Posterior vena cava (tissue), 2 donors: ENCODE measurements at regions of chr6 and their contacts with region 1.

Region 1: DNA sequence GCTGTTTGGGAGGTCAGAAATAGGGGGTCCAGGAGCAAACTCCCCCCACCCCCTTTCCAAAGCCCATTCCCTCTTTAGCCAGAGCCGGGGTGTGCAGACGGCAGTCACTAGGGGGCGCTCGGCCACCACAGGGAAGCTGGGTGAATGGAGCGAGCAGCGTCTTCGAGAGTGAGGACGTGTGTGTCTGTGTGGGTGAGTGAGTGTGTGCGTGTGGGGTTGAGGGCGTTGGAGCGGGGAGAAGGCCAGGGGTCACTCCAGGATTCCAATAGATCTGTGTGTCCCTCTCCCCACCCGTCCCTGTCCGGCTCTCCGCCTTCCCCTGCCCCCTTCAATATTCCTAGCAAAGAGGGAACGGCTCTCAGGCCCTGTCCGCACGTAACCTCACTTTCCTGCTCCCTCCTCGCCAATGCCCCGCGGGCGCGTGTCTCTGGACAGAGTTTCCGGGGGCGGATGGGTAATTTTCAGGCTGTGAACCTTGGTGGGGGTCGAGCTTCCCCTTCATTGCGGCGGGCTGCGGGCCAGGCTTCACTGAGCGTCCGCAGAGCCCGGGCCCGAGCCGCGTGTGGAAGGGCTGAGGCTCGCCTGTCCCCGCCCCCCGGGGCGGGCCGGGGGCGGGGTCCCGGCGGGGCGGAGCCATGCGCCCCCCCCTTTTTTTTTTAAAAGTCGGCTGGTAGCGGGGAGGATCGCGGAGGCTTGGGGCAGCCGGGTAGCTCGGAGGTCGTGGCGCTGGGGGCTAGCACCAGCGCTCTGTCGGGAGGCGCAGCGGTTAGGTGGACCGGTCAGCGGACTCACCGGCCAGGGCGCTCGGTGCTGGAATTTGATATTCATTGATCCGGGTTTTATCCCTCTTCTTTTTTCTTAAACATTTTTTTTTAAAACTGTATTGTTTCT is at the start of gene VEGFA:
- DNase-seq: peak; percentile 97
- total RNA-seq, gene VEGFA: 88.4 to 91.7 TPM

Region 2: GRCh38 chr6:43667245-43668150 is 102.3 kb before region 1 on chr6:
- intact Hi-C with region 1: loop called in 1 of 2 experiments (anchors 5 kb)
- DNase-seq: peak; percentile 93

Region 3: GRCh38 chr6:43951063-43951755 is 181.4 kb after region 1 on chr6:
- intact Hi-C with region 1: loop called in 1 of 2 experiments (anchors 10 kb)
- DNase-seq: peak; percentile 83

Region 4: GRCh38 chr6:44074439-44075136 is 304.8 kb after region 1 on chr6:
- intact Hi-C with region 1: loop called (anchors 2 to 5 kb)
- DNase-seq: peak; percentile 94